Panc1 (cell line): ENCODE measurements at regions of chr6 and their contacts with region 1.

Region 1: DNA sequence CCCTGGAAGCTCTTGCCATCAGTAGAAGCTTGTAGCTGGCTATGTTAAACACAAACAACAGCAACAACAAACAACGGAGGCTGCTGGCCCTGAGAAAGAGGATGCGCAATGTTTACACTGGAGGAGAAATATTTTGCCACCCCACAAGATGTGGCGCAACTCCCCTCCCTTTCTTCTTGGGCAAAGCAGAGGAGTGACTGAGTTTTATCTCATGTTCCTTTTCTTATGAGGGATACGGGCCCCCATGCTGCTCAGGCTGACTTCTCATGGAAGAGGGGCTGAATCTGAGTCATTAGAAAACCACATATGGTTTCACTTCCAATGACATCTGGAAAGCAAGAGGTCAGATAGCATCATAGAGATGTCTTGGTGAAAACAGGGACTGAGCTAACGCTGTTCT is 75.9 kb upstream of the HDDC2 start:
- DNase-seq: no peak
- ATAC-seq: no peak
- H3K4me3 ChIP-seq: no peak overlapping the region
- H3K27ac ChIP-seq: no peak overlapping the region
- H3K4me1 ChIP-seq: no peaks in the 10 kb centered on the region
- H3K27me3 ChIP-seq: peaks cover 31% of the 10 kb centered on the region
- CTCF ChIP-seq: no peak

Region 2: GRCh38 chr6:125149256-125150144 is 228.1 kb before region 1 on chr6:
- CTCF ChIA-PET with region 1: no interaction called
- POLR2A ChIA-PET with region 1: no interaction called
- in situ Hi-C with region 1: no loop called
- intact Hi-C with region 1: no loop called
- DNase-seq: no peak
- ATAC-seq: no peak
- H3K4me3 ChIP-seq: no peak overlapping the region
- H3K27ac ChIP-seq: no peak overlapping the region
- H3K4me1 ChIP-seq: no peaks in the 10 kb centered on the region
- H3K27me3 ChIP-seq: peaks cover 39% of the 10 kb centered on the region
- CTCF ChIP-seq: no peak

Region 3: DNA sequence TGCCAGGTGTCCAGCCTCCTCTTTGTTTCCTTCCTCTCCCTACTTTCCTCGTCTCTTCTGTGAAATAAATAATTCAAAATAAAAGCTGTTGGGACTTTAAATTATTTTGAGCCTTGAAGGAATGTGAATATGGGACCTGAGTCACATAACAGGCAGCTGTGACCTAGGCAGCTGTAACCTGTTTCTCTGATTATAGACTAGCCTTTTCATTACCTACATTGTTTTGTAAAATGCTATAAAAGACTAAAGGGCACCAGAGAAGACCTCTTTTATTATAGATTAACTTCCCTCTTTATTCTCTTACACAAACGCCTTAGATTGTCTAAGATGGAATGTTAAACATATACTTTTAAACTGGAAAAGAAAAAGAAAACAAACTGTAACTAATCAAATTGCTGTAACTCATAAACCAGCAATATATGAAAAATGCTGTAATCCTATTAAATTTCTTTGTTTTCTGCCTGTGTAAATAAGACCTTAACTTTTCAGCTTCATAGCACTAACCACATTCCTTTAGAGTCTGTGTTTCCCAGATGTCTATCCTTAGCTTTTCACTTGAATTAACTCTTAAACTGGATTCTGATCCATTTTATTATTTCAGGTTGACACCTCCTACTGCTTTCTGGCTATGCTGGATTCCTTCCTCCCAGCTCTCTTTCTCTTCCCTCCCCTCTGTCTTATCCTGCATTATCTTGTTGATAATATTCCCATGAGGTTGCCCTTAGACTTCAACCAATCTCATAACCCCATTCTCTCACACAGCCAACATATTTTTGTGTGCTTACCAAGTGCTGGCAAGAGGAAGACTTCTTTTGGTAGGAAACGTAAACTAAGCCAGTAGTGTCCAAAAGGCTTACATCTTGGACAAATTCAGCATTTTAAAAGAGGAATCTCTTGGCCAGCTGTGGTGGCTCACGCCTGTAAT is 154.8 kb before region 1 on chr6:
- CTCF ChIA-PET with region 1: no interaction called
- POLR2A ChIA-PET with region 1: interaction called, 15 read pairs
- in situ Hi-C with region 1: no loop called
- intact Hi-C with region 1: no loop called
- DNase-seq: no peak
- ATAC-seq: no peak
- H3K4me3 ChIP-seq: no peak overlapping the region
- H3K27ac ChIP-seq: no peak overlapping the region
- H3K4me1 ChIP-seq: no peaks in the 10 kb centered on the region
- H3K27me3 ChIP-seq: peaks cover 12% of the 10 kb centered on the region; the same call in 1 of the 2 replicates
- CTCF ChIP-seq: no peak

Region 4: DNA sequence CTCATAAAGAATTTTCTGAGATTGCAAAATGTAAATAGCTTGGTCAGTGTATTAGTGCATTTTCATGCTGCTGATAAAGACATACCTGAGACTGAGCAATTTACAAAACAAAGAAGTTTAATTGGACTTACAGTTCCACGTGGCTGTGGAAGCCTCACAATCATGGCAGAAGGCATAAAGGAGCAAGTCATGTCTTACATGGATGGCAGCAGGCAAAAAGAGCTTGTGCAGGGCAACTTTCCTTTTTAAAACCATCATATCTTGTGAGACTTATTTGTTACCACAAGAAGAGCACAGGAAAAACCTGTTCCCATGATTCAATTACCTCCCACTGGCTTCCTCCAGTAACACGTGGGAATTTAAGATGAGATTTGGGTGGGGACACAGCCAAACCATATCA is 36.9 kb after region 1 on chr6:
- CTCF ChIA-PET with region 1: no interaction called
- POLR2A ChIA-PET with region 1: no interaction called
- in situ Hi-C with region 1: no loop called
- intact Hi-C with region 1: loop called (anchors 1 kb)
- DNase-seq: no peak
- ATAC-seq: no peak
- H3K4me3 ChIP-seq: no peak overlapping the region
- H3K27ac ChIP-seq: no peak overlapping the region
- H3K4me1 ChIP-seq: no peaks in the 10 kb centered on the region
- H3K27me3 ChIP-seq: no peaks in the 10 kb centered on the region
- CTCF ChIP-seq: no peak

Region 5: DNA sequence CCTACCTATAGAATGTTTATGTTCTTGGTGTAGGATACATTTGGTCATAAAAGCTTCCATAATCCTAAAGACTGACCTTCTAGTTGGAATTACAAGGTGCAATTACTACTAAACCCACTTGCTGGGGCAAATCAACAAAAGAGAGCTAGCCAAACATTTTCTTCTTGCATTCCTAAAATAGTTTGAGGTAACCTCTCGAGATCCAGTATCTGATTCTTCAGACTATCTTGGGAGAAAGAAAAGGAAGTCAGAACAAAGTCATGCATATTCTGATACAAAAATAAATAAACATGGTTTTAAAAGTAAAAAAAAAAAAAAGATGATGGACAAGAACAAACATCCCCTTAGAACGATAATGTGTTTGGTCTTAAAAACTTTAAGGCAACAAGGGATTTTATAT is 1446.6 kb after region 1 on chr6:
- CTCF ChIA-PET with region 1: no interaction called
- POLR2A ChIA-PET with region 1: no interaction called
- in situ Hi-C with region 1: no loop called
- intact Hi-C with region 1: no loop called
- DNase-seq: no peak
- ATAC-seq: no peak
- H3K4me3 ChIP-seq: no peak overlapping the region
- H3K27ac ChIP-seq: no peak overlapping the region
- H3K4me1 ChIP-seq: no peaks in the 10 kb centered on the region
- H3K27me3 ChIP-seq: no peaks in the 10 kb centered on the region
- CTCF ChIP-seq: no peak